Activated CD4-positive, alpha-beta T cell treated with anti-CD3 and anti-CD28 coated beads for 36 hours (primary cell): ENCODE measurements at regions of chr11 and their contacts with region 1.

Region 1: GRCh38 chr11:36306888-36307287 is 10.8 kb downstream of the PRR5L start:
- DNase-seq: peak; percentile 64
- ATAC-seq: peak; percentile 53
- H3K4me3 Mint-ChIP-seq: no peak overlapping the region
- H3K27ac Mint-ChIP-seq: no peak overlapping the region
- H3K4me1 Mint-ChIP-seq: peaks cover 12% of the 10 kb centered on the region
- H3K27me3 Mint-ChIP-seq: peaks cover 13% of the 10 kb centered on the region

Region 2: GRCh38 chr11:36347384-36347906 is 40.6 kb after region 1 on chr11:
- CTCF ChIA-PET with region 1: interaction called, 3 read pairs
- POLR2A ChIA-PET with region 1: no interaction called
- intact Hi-C with region 1: loop called (anchors 2 kb)
- DNase-seq: no peak
- ATAC-seq: peak; percentile 16
- H3K4me3 Mint-ChIP-seq: peak overlapping the region; percentile 23
- H3K27ac Mint-ChIP-seq: peak overlapping the region; percentile 82
- H3K4me1 Mint-ChIP-seq: peaks cover 66% of the 10 kb centered on the region
- H3K27me3 Mint-ChIP-seq: peaks cover 7% of the 10 kb centered on the region